CD8-positive, alpha-beta T cell (primary cell): ENCODE measurements at regions of chr7 and their contacts with region 1.

Region 1: GRCh38 chr7:69799048-69799697 is 200.9 kb downstream of the AUTS2 start:
- DNase-seq: no peak
- ATAC-seq: no peak
- H3K4me3 ChIP-seq: no peak overlapping the region
- H3K4me3 Mint-ChIP-seq: no peak overlapping the region
- H3K27ac ChIP-seq: no peak overlapping the region
- H3K27ac Mint-ChIP-seq: no peak overlapping the region
- H3K4me1 ChIP-seq: no peaks in the 10 kb centered on the region
- H3K4me1 Mint-ChIP-seq: peaks cover 2% of the 10 kb centered on the region
- H3K27me3 ChIP-seq: no peaks in the 10 kb centered on the region
- H3K27me3 Mint-ChIP-seq: no peaks in the 10 kb centered on the region
- CTCF ChIP-seq: no peak

Region 2: GRCh38 chr7:69115788-69116187 is 683.4 kb before region 1 on chr7:
- CTCF ChIA-PET with region 1: no interaction called
- POLR2A ChIA-PET with region 1: no interaction called
- intact Hi-C with region 1: loop called in 1 of 2 experiments (anchors 5 kb)
- DNase-seq: no peak
- ATAC-seq: no peak
- H3K4me3 ChIP-seq: no peak overlapping the region
- H3K4me3 Mint-ChIP-seq: no peak overlapping the region
- H3K27ac ChIP-seq: no peak overlapping the region
- H3K27ac Mint-ChIP-seq: no peak overlapping the region
- H3K4me1 ChIP-seq: no peaks in the 10 kb centered on the region
- H3K4me1 Mint-ChIP-seq: no peaks in the 10 kb centered on the region
- H3K27me3 ChIP-seq: no peaks in the 10 kb centered on the region
- H3K27me3 Mint-ChIP-seq: no peaks in the 10 kb centered on the region
- CTCF ChIP-seq: no peak